ENCODE measurements at regions of chr1 and their contacts with region 1.

Region 1: GRCh38 chr1:33460947-33461629 is 11.4 kb upstream of the ZSCAN20 start:
- DNase-seq: peak; percentile 25 to 39
- H3K4me3 ChIP-seq: no peak overlapping the region
- H3K27ac ChIP-seq: no peak overlapping the region
- H3K4me1 ChIP-seq: peaks cover 0 to 14% of the 10 kb centered on the region in 2 donors
- H3K27me3 ChIP-seq: no peaks in the 10 kb centered on the region
- CTCF ChIP-seq: no peak
- POLR2A ChIP-seq: no peak

Region 2: DNA sequence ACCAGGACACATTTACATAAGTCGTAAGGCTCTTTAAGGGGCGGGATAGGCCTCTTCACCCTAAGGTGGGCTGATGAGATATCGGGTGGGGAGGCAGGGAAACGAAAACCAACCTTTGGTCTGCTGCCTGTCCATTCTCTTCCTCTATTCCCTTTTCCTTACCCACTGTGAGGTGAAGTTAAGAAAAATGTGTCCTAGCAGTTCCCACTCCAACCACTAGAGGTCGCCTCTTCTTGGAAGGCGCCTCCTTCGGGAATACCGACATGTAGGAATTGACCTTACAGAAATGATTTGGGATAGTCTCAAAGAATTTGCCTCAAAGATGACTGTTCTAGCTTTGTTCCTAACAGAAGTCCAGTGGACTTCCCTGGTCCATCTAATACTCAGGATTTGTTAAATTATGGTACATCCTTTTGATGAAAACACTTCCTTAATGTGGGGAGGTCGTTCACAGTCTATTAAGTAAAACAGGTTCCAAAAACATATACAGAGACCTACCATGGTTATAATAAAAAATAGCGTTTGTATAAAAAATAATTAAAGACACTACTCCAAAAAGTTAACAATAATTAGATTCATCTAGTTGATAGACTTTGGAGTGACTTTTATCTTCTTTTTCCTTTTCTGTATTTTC is 366.0 kb before region 1 on chr1:
- intact Hi-C with region 1: loop called (anchors 10 kb)
- DNase-seq: peak; percentile 53 to 66
- H3K4me3 ChIP-seq: no peak overlapping the region
- H3K27ac ChIP-seq: no peak overlapping the region
- H3K4me1 ChIP-seq: no peaks in the 10 kb centered on the region
- H3K27me3 ChIP-seq: no peaks in the 10 kb centered on the region
- CTCF ChIP-seq: peak; percentile 77 to 99 (median 95)
- POLR2A ChIP-seq: no peak

Region 3: GRCh38 chr1:33219881-33220661 is 241.0 kb before region 1 on chr1:
- intact Hi-C with region 1: loop called (anchors 10 kb)
- DNase-seq: no peak
- H3K4me3 ChIP-seq: no peak overlapping the region
- H3K27ac ChIP-seq: no peak overlapping the region
- H3K4me1 ChIP-seq: no peaks in the 10 kb centered on the region
- H3K27me3 ChIP-seq: no peaks in the 10 kb centered on the region
- CTCF ChIP-seq: no peak
- POLR2A ChIP-seq: no peak

Region 4: GRCh38 chr1:33295450-33296081 is 165.5 kb before region 1 on chr1:
- intact Hi-C with region 1: loop called (anchors 10 kb)
- DNase-seq: peak; percentile 91
- H3K4me3 ChIP-seq: no peak overlapping the region
- H3K27ac ChIP-seq: peak overlapping the region in 1 of 3 donors; percentile 45
- H3K4me1 ChIP-seq: peaks cover 8 to 9% of the 10 kb centered on the region in 2 donors
- H3K27me3 ChIP-seq: no peaks in the 10 kb centered on the region
- CTCF ChIP-seq: peak; percentile 93 to 98 (median 97)
- POLR2A ChIP-seq: no peak

Measured in thyroid gland (tissue), 4 donors.